B cell (primary cell): ENCODE measurements at regions of chr1 and their contacts with region 1.

Region 1: GRCh38 chr1:174999216-174999925 is 376 bp upstream of the CACYBP start:
- DNase-seq: peak; percentile 100
- ATAC-seq: peak; percentile 73
- H3K4me3 ChIP-seq: peak overlapping the region; percentile 73 to 93 (median 91)
- H3K4me3 Mint-ChIP-seq: no peak overlapping the region
- H3K27ac ChIP-seq: peak overlapping the region; percentile 99
- H3K27ac Mint-ChIP-seq: no peak overlapping the region
- H3K4me1 ChIP-seq: peaks cover 22 to 23% of the 10 kb centered on the region in 2 donors
- H3K4me1 Mint-ChIP-seq: peaks cover 36% of the 10 kb centered on the region
- H3K27me3 ChIP-seq: no peaks in the 10 kb centered on the region
- H3K27me3 Mint-ChIP-seq: no peaks in the 10 kb centered on the region
- CTCF ChIP-seq: no peak

Region 2: DNA sequence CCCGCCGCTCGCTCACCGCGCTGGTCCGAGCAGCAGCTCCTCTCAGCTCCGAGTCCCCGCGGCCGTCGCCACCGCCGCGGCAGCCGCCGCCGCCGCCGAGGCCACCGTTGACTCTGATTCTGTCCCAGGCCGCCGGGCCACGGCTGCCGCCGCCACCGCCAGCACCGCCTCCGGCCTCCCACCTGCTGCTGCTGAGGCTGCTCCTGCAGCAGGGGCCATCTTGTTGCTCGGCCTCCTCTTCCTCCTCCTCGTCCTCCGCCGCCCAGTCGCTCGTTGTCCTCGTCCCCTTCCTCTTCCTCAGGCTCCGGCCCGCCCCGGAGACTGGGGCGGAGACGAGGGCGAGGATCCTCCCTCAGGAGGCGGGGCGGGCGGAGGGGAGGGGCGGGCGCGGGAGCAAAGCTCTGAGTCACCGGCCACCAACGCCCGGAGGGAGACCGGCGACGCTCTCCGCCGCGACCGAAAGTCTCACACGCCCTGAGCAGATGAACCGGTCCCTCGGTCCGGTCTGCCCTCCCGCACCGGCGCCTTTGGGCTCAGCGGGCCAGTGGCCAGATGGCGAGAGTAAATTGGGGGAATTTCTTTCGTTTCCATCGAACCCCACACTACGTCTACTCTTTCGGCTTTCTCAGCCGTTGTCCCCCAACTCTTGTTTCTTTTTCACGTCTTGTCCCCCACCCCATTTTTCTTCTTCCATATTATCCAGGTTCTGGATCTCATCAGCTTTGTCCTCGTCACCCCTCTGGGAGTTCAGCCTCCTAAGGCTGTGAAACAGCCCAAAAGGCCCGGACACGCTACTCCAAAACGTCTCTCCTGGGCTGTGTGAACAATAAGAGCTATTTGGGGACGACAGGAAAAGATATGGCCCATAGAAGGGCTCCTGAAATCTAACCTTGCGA is 977.0 kb before region 1 on chr1 and contains the start of gene RC3H1:
- CTCF ChIA-PET with region 1: no interaction called
- POLR2A ChIA-PET with region 1: no interaction called
- intact Hi-C with region 1: loop called (anchors 1 kb)
- DNase-seq: peak; percentile 93
- ATAC-seq: peak; percentile 95
- H3K4me3 ChIP-seq: peak within 1 kb of the TSS; percentile 73 to 94 (median 91)
- H3K4me3 Mint-ChIP-seq: peak within 1 kb of the TSS; percentile 95
- H3K27ac ChIP-seq: peak within 1 kb of the TSS; percentile 76 to 93
- H3K27ac Mint-ChIP-seq: peak within 1 kb of the TSS; percentile 96
- H3K4me1 ChIP-seq: peaks cover 30 to 36% of the 10 kb centered on the region in 2 donors
- H3K4me1 Mint-ChIP-seq: peaks cover 41% of the 10 kb centered on the region
- H3K27me3 ChIP-seq: no peaks in the 10 kb centered on the region
- H3K27me3 Mint-ChIP-seq: no peaks in the 10 kb centered on the region
- CTCF ChIP-seq: no peak
- total RNA-seq, gene RC3H1: 84.4 and 84.5 TPM in 2 replicates

Region 3: GRCh38 chr1:174769961-174770549 is 229.3 kb before region 1 on chr1:
- CTCF ChIA-PET with region 1: interaction called, 22 read pairs
- POLR2A ChIA-PET with region 1: interaction called, 3 read pairs
- intact Hi-C with region 1: loop called (anchors 1 kb)
- DNase-seq: peak; percentile 63
- ATAC-seq: peak; percentile 57
- H3K4me3 ChIP-seq: no peak overlapping the region
- H3K4me3 Mint-ChIP-seq: no peak overlapping the region
- H3K27ac ChIP-seq: no peak overlapping the region
- H3K27ac Mint-ChIP-seq: no peak overlapping the region
- H3K4me1 ChIP-seq: no peaks in the 10 kb centered on the region
- H3K4me1 Mint-ChIP-seq: peaks cover 8% of the 10 kb centered on the region
- H3K27me3 ChIP-seq: no peaks in the 10 kb centered on the region
- H3K27me3 Mint-ChIP-seq: no peaks in the 10 kb centered on the region
- CTCF ChIP-seq: peak; percentile 86

Region 4: DNA sequence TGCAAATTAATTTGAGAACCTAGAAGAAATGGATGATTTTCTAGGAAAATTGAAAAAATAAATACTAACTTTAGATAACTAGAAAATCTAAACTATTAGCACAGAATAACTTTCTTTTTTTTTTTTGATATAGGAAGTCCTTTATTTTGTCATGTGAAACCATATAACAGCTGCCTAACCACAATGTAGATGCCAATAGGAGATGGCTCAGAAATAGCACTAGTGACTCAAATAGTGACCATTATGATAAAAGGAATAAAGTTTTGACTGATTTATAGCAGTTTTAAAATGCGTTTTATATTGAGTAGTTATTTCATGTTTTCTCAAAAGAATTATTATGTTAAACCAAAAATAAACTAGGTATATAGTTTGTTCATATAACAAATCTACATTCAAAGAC is 157.6 kb before region 1 on chr1:
- CTCF ChIA-PET with region 1: no interaction called
- POLR2A ChIA-PET with region 1: no interaction called
- intact Hi-C with region 1: no loop called
- DNase-seq: peak; percentile 6
- ATAC-seq: no peak
- H3K4me3 ChIP-seq: no peak overlapping the region
- H3K4me3 Mint-ChIP-seq: no peak overlapping the region
- H3K27ac ChIP-seq: no peak overlapping the region
- H3K27ac Mint-ChIP-seq: no peak overlapping the region
- H3K4me1 ChIP-seq: peaks cover 0 to 3% of the 10 kb centered on the region in 2 donors
- H3K4me1 Mint-ChIP-seq: peaks cover 27% of the 10 kb centered on the region
- H3K27me3 ChIP-seq: no peaks in the 10 kb centered on the region
- H3K27me3 Mint-ChIP-seq: no peaks in the 10 kb centered on the region
- CTCF ChIP-seq: no peak

Region 5: DNA sequence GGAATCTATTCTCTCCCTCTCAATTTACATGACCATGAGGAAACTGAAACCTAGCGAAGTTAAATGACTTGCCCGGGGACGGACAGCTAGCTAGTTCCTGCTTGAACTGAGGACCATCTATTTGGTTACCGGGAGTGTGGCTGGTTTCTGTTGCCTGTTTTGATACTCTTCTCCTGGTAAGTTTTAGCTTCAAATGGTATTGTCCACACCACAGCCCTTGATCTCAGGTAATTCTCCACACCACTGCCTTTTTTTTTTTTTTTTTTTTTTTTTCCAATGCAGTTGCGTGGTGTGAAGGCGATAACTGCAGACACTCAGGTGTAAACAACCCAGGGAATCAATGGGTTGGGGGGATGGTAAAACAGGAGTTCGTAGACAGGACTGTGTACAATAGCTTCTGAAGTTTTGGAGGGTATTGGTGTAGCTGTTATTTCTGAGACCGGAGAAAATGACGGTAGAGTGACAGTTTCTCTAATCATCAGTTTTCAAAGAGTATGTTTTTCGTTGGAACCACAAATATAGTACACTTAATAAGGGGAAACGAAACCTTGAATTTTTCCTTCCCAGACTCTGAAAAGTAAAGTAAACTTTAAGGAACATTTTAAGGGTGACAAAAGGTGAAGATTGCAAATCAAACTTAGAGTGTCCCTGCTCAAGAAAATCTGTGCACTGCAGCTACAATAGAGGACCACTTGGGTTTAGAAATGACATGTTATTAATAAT is 124.9 kb before region 1 on chr1:
- CTCF ChIA-PET with region 1: no interaction called
- POLR2A ChIA-PET with region 1: interaction called, 5 read pairs
- intact Hi-C with region 1: loop called (anchors 1 kb)
- DNase-seq: peak; percentile 47
- ATAC-seq: peak; percentile 48
- H3K4me3 ChIP-seq: peak overlapping the region; percentile 30 to 68 (median 63)
- H3K4me3 Mint-ChIP-seq: peak overlapping the region; percentile 91
- H3K27ac ChIP-seq: peak overlapping the region in 1 of 2 donors; percentile 72
- H3K27ac Mint-ChIP-seq: peak overlapping the region; percentile 86
- H3K4me1 ChIP-seq: peaks cover 20 to 31% of the 10 kb centered on the region in 2 donors
- H3K4me1 Mint-ChIP-seq: peaks cover 51% of the 10 kb centered on the region
- H3K27me3 ChIP-seq: no peaks in the 10 kb centered on the region
- H3K27me3 Mint-ChIP-seq: no peaks in the 10 kb centered on the region
- CTCF ChIP-seq: no peak

Region 6: DNA sequence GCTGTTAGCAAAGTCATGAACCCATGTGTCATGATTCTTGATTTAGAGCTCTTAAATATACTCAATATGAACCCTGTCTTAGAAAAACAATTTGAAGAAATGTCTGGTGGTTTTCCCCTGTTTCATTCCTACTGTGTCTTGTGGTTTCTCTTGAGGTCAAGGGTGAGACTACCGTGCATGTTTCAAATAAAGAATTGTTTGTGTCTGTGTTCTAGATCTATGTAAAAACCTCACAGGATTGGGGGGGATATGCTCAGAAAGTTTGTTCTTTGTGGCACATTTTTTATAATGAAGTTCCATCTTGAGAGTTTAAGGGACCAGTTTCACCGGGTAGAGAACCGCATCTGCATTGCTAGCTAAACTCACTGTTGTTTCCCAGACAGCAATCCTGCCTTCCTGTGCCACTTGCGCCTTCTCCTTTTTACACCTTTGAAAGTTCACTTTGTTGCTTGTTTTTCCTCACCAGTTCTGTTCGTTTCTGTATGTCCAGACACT is 30.6 kb before region 1 on chr1:
- CTCF ChIA-PET with region 1: interaction called, 4 read pairs
- POLR2A ChIA-PET with region 1: interaction called, 10 read pairs
- intact Hi-C with region 1: loop called (anchors 2 kb)
- DNase-seq: peak; percentile 41
- ATAC-seq: peak; percentile 58
- H3K4me3 ChIP-seq: peak overlapping the region in 1 of 5 experiments; percentile 0
- H3K4me3 Mint-ChIP-seq: peak overlapping the region; percentile 82
- H3K27ac ChIP-seq: peak overlapping the region; percentile 38 to 63
- H3K27ac Mint-ChIP-seq: peak overlapping the region; percentile 90
- H3K4me1 ChIP-seq: peaks cover 47 to 55% of the 10 kb centered on the region in 2 donors
- H3K4me1 Mint-ChIP-seq: peaks cover 59% of the 10 kb centered on the region
- H3K27me3 ChIP-seq: no peaks in the 10 kb centered on the region
- H3K27me3 Mint-ChIP-seq: no peaks in the 10 kb centered on the region
- CTCF ChIP-seq: no peak

Region 7: DNA sequence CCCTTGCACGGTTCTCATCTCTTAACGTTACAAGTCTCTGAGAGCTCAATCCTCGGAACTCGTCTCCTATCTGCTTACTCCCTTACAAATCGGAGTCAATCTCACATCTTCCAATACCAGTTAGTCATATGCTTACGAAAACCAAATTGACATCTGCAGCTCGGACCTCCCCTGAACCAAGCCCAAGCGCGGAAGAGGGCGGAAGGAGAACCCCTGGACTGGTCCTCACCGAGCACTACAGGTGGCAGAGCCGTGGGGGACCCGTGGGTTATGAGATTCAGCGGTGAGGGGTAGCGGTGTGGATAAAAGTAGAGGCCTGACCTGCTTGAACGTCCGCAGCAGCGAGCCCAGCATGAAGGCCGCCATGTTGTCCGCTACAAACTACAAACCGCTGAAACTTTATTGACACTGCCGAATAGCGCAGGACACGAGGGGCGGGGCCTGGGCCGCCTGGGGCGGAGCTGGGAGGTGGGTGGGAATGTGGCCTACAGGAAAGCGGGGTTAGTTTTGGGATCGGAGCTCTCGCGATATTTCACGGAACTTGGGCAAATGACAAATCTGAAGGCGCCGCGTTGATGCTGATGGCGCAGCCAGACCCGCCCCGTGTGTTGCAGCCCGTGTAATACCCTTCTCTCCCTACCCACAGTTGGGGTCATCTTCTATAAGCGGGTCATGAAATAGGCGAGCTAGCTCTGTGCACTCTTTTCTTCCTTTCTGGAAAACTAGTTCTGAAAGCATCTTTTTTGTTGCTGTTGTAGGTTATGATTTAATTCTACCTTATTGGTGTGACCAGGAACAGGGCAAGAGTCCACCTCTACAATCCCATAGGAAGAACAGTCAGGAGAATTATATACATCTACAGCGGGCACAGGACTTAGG is 23.9 kb after region 1 on chr1 and contains the start of gene MRPS14:
- CTCF ChIA-PET with region 1: interaction called, 18 read pairs
- POLR2A ChIA-PET with region 1: interaction called, 57 read pairs
- intact Hi-C with region 1: loop called (anchors 1 kb)
- DNase-seq: peak; percentile 99
- ATAC-seq: peak; percentile 95
- H3K4me3 ChIP-seq: peak within 1 kb of the TSS; percentile 91 to 99 (median 95)
- H3K4me3 Mint-ChIP-seq: peak within 1 kb of the TSS; percentile 95
- H3K27ac ChIP-seq: peak within 1 kb of the TSS; percentile 84 to 87
- H3K27ac Mint-ChIP-seq: peak within 1 kb of the TSS; percentile 92
- H3K4me1 ChIP-seq: peaks cover 10 to 15% of the 10 kb centered on the region in 2 donors
- H3K4me1 Mint-ChIP-seq: peaks cover 28% of the 10 kb centered on the region
- H3K27me3 ChIP-seq: no peaks in the 10 kb centered on the region
- H3K27me3 Mint-ChIP-seq: no peaks in the 10 kb centered on the region
- CTCF ChIP-seq: no peak
- total RNA-seq, gene MRPS14: 26.5 and 29.4 TPM in 2 replicates